SK-N-SH (cell line): ENCODE measurements at regions of chr15 and their contacts with region 1.

Region 1: DNA sequence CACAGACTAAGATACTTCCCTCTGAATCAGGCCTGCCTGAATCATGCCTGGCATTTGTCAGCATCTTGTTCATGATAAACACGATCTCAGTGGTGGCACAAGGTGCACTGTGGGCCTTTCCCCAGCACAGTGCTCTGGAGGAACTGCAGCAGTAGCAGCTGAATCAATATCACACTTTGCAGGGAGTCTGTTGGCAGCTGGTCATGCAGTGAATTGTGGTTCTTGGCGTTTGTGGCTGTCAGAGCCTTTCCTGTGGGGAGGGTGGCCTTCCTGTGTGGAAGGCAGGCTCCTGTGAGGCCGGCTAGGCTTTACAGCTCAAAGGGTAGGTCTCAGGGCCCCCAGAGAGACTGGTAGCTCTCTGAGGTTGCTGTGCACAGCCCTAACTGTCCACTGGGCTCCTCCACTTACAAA is 54.4 kb upstream of the TLE3 start:
- DNase-seq: no peak
- H3K4me3 ChIP-seq: no peak overlapping the region
- H3K27ac ChIP-seq: peak overlapping the region in 1 of 2 experiments; percentile 88; a peak in 2 of 4 replicates
- H3K4me1 ChIP-seq: peaks cover 9 to 70% of the 10 kb centered on the region in 2 experiments; a peak in 3 of 4 replicates
- H3K27me3 ChIP-seq: no peaks in the 10 kb centered on the region
- CTCF ChIP-seq: no peak
- EP300 ChIP-seq: peak in 1 of 2 experiments; percentile 26; a peak in 1 of 4 replicates
- RAD21 ChIP-seq: no peak

Region 2: DNA sequence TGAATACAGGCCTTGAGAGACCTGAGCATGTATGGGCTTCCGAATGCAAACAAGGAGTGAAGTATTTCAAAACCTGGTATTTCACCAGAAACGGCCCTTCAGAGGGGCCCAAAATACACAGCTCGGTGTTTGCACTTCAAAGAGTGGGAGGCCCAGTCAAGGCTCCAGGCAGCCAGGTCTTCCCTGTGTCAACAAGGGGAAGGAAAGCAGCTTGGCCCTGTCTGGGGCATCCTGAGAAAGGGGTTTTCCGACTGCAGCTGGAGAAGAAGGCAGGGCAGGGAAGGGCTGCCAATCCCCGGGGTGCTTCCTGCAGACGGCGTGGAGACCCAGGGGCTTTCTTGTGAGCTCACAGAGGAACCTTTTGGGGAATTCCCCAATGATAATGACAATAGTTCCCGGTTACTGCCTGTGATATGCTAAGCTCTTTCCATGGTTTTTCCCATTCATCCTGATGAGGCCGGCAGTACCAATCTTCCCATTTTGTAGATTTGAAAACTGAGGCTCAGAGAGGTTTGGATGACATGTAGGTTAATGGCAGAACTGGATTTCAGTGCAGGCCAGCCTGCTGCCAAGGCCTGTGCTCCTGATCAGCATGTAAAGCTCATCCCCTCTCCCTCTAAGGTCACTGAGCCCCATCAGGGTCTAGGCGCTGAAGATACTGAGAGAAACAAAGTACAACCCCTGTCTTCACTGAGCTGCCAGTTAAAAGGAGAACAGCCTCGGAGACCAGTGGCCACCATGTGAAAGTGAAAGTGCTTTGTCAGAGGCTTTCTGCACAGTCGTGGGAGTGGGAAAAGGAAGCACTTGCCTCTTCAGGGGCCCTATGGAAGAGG is 11.3 kb before region 1 on chr15:
- CTCF ChIA-PET with region 1: interaction called, 15 read pairs
- POLR2A ChIA-PET with region 1: no interaction called
- DNase-seq: no peak
- H3K4me3 ChIP-seq: no peak overlapping the region
- H3K27ac ChIP-seq: no peak overlapping the region
- H3K4me1 ChIP-seq: peaks cover 0 to 4% of the 10 kb centered on the region in 2 experiments; a peak in 2 of 4 replicates
- H3K27me3 ChIP-seq: no peaks in the 10 kb centered on the region
- CTCF ChIP-seq: no peak
- EP300 ChIP-seq: no peak
- RAD21 ChIP-seq: no peak

Region 3: DNA sequence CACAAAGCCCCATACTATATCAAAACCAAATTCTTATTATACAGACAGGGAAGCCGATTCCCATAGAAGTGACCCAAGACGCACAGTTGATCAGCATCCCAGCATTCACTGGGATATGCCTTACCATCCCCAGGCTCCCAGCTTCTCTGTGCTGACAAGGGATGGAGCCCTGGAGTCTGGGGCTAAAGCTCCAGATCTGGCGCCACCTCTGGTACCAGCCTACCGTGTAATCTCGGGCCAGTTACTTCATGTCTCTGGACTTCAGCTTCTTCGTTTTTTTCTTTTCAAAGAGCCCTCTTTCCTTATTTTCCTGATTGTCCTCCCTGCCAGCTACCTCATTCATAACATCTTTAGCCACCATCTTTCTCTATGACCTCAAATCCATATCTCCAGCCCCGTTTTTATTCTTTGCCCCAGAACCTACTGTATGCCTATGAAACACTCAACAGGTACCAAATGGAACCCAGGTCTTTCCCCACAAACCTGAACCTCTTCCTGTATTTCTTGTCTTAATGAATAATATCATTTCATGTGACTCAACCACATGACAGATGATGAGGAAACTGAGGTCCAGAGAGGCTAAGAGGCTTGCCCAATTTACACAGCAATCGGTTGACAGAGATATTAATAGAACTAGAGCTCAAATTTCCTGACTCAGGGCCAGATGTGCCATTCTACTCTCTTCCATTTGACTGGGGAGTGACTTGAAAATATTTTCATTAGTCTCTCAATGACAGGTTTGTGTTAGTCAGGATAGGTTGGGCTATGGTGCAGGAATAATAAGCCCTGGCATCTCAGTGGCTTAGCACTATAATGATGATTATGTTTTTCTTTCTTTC is 31.0 kb after region 1 on chr15:
- CTCF ChIA-PET with region 1: interaction called, 10 read pairs
- POLR2A ChIA-PET with region 1: interaction called, 4 read pairs
- DNase-seq: no peak
- H3K4me3 ChIP-seq: no peak overlapping the region
- H3K27ac ChIP-seq: no peak overlapping the region
- H3K4me1 ChIP-seq: peaks cover 0 to 54% of the 10 kb centered on the region in 2 experiments; a peak in 1 of 4 replicates
- H3K27me3 ChIP-seq: no peaks in the 10 kb centered on the region
- CTCF ChIP-seq: no peak
- EP300 ChIP-seq: no peak
- RAD21 ChIP-seq: no peak

Region 4: GRCh38 chr15:70214267-70214666 is 62.2 kb after region 1 on chr15:
- CTCF ChIA-PET with region 1: no interaction called
- POLR2A ChIA-PET with region 1: no interaction called
- DNase-seq: no peak
- H3K4me3 ChIP-seq: no peak overlapping the region
- H3K27ac ChIP-seq: no peak overlapping the region
- H3K4me1 ChIP-seq: peaks cover 0 to 44% of the 10 kb centered on the region in 2 experiments; a peak in 1 of 4 replicates
- H3K27me3 ChIP-seq: no peaks in the 10 kb centered on the region
- CTCF ChIP-seq: peak; percentile 8; the same call in 1 of the 2 replicates
- EP300 ChIP-seq: no peak
- RAD21 ChIP-seq: no peak

Region 5: GRCh38 chr15:70281811-70282307 is 129.8 kb after region 1 on chr15:
- CTCF ChIA-PET with region 1: no interaction called
- POLR2A ChIA-PET with region 1: no interaction called
- DNase-seq: no peak
- H3K4me3 ChIP-seq: no peak overlapping the region
- H3K27ac ChIP-seq: peak overlapping the region in 1 of 2 experiments; percentile 50; a peak in 2 of 4 replicates
- H3K4me1 ChIP-seq: peaks cover 12 to 26% of the 10 kb centered on the region in 2 experiments; a peak in 3 of 4 replicates
- H3K27me3 ChIP-seq: no peaks in the 10 kb centered on the region
- CTCF ChIP-seq: no peak
- EP300 ChIP-seq: peak in 1 of 2 experiments; percentile 39; a peak in 1 of 4 replicates
- RAD21 ChIP-seq: no peak

Region 6: DNA sequence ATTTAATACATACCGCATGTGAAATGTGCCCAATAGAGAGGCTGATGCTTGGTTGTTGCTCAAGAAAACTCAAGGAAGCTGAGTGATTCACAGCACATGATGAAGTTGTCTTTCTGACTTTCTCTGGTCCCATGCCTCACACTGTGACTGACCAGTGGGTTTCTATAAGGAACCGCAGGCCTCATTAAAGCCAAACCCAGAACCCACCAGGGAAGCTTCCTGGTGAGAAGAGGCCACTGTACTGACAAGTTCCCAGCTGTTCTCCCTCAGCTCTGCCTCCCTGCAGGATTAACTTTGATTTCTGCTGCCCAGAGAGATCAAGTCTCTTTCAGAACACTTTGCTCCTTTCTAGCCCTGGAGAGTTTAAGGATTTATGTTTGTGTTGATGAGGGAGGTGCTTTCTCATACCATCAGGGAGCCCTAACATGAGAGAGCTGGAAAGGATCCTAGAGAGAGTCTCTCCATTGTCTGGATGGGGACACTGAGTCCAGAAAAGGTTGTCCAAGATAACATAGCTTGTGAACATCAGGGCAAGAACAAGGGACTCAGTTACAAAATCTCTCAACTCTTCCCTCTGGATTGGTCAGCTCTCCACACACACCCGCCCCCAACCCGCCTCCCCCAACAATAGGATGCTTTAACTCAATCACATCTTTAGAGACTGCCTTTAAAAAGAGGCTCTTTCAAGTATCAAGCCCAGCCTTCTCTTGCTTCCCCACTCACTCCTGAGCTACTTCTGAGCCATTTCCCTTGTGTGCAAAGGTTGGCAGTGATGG is 248.9 kb after region 1 on chr15:
- CTCF ChIA-PET with region 1: no interaction called
- POLR2A ChIA-PET with region 1: no interaction called
- DNase-seq: no peak
- H3K4me3 ChIP-seq: no peak overlapping the region
- H3K27ac ChIP-seq: no peak overlapping the region
- H3K4me1 ChIP-seq: peaks cover 0 to 11% of the 10 kb centered on the region in 2 experiments; a peak in 1 of 4 replicates
- H3K27me3 ChIP-seq: peaks cover 23% of the 10 kb centered on the region; the same call in 1 of the 2 replicates
- CTCF ChIP-seq: no peak
- EP300 ChIP-seq: no peak
- RAD21 ChIP-seq: no peak